H1 (cell line): ENCODE measurements at regions of chr12 and their contacts with region 1.

Region 1: DNA sequence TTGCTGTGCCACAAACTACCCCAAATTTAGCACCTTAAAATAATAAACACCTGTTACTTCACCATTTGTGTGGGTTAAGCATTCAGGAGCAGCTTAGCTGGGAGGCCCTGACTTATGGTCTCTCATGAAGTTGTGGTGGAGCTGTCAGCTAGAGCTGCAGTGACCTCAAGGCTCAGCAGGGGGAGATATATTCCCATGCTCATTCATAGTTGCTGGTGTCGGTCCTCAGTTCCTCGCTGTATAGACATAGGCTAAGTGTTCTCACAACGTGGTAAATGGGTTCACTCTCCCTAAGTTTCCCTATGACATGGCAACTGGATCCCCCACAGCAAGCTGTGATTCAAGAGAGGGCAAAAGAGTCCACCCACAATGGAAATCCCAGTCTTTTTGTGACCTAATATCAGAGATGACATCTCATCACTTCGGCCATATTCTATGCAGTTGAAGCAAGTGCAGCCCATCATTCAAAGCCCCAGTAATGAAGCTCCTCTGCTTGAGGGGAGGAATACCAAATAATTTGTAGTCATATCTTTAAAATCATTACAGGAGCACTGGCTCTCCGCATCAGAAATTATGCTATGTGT is 41.1 kb downstream of the PRB3 start:
- DNase-seq: peak; percentile 56 to 75
- H3K4me3 ChIP-seq: no peak overlapping the region
- H3K27ac ChIP-seq: no peak overlapping the region
- H3K4me1 ChIP-seq: no peaks in the 10 kb centered on the region
- H3K27me3 ChIP-seq: no peaks in the 10 kb centered on the region
- CTCF ChIP-seq: peak; percentile 73 to 95 (median 94)
- EP300 ChIP-seq: no peak
- POLR2A ChIP-seq: no peak
- RAD21 ChIP-seq: peak; percentile 95 to 97

Region 2: GRCh38 chr12:10771132-10771733 is 457.2 kb before region 1 on chr12:
- CTCF ChIA-PET with region 1: interaction called, 27 read pairs
- POLR2A ChIA-PET with region 1: no interaction called
- DNase-seq: no peak
- H3K4me3 ChIP-seq: no peak overlapping the region
- H3K27ac ChIP-seq: no peak overlapping the region
- H3K4me1 ChIP-seq: no peaks in the 10 kb centered on the region
- H3K27me3 ChIP-seq: no peaks in the 10 kb centered on the region
- CTCF ChIP-seq: peak in 2 of 3 experiments; percentile 28 to 47; a peak in 2 of 4 replicates
- EP300 ChIP-seq: no peak
- POLR2A ChIP-seq: no peak
- RAD21 ChIP-seq: peak; percentile 70 to 86

Region 3: GRCh38 chr12:11183011-11183410 is 45.4 kb before region 1 on chr12:
- CTCF ChIA-PET with region 1: no interaction called
- POLR2A ChIA-PET with region 1: no interaction called
- DNase-seq: no peak
- H3K4me3 ChIP-seq: no peak overlapping the region
- H3K27ac ChIP-seq: no peak overlapping the region
- H3K4me1 ChIP-seq: no peaks in the 10 kb centered on the region
- H3K27me3 ChIP-seq: no peaks in the 10 kb centered on the region
- CTCF ChIP-seq: no peak
- EP300 ChIP-seq: no peak
- POLR2A ChIP-seq: no peak
- RAD21 ChIP-seq: no peak